ENCODE measurements at regions of chr9 and their contacts with region 1.

Region 1: DNA sequence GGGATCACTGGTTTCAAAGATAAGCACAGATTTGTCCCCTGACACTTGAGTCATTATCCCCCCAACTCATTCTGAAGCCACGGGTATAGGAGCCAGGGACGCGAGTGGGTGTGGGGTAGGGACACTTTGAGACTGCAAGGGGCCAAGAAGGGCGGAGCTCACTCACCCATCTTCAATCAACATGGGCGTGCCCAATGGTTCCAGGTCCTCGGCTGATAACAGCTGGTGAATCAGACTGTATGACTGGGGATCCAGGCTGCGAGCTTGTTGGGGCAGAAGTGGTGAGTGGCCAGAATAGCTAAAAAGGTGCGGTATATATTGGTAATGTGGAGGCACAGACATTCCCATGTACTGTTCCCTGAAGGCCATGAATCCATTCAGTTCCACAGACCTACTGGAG is 30.7 kb upstream of the NR5A1 start:
- DNase-seq: no peak
- H3K4me3 ChIP-seq: no peak overlapping the region
- CTCF ChIP-seq: no peak

Region 2: DNA sequence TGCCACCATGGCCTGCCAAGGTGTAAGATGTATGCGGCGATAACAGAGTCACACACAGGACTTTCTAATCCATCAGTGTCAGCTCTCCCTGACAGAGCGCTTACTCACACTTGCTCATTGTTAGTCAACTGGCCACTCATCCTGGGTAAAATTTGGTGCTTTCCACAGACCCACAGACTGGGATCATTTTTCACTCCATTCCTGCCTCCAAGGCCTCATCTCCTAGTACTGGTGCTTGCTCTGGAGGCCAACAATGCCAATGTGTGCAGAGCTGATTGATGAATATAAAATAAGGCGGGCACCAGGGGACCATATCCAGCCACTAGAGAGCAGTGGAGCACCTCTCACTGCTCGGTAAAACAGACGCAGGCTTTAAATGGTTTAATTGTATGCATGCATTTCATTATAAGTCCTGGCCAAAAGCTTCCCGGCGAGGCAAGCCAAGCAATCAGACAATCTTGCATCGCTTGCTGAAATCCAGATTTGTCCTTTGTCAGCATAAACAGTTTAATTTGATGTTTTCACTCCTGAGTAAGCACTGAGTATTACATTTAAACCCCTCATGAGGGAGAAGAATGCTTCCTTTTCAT is 145.0 kb before region 1 on chr9:
- CTCF ChIA-PET with region 1: interaction called, 18 read pairs
- POLR2A ChIA-PET with region 1: interaction called, 3 read pairs
- DNase-seq: peak; percentile 63
- H3K4me3 ChIP-seq: no peak overlapping the region
- CTCF ChIP-seq: peak; percentile 55

Region 3: DNA sequence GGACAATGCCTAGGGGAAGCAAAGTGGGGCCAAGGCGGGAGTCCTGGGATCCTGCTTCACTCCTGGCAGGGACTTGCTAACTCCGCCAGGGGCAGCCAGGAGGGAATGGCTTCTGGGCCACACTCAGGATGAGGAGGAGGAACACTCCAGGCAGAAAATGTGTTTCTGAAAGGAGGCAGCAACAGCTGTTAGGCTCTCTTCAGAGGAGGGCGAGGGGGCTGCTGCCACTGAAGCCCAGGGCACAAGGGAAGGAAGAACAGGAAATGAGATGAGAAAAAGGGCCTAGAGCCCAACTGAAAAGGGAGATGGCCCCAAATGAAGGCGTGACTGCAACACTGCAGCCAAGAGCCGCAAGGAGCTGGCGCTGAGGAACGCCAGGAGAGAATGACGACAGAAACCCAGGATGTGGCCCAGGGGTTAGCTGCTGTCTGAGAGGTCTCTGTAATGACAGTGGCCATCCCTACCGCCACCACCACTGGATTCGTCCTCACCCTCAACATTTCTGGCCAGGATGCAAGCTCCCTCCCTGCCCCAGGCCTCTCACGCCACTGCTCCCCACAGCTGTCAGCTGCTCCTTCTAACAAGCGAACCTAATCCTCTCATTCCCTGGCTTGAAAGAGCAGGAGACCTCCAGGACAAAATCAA is 138.5 kb before region 1 on chr9:
- CTCF ChIA-PET with region 1: interaction called, 18 read pairs
- POLR2A ChIA-PET with region 1: interaction called, 3 read pairs
- DNase-seq: no peak
- H3K4me3 ChIP-seq: no peak overlapping the region
- CTCF ChIP-seq: no peak

Region 4: GRCh38 chr9:124420991-124421543 is 116.9 kb before region 1 on chr9:
- CTCF ChIA-PET with region 1: interaction called, 263 read pairs
- POLR2A ChIA-PET with region 1: no interaction called
- DNase-seq: no peak
- H3K4me3 ChIP-seq: no peak overlapping the region
- CTCF ChIP-seq: no peak

Region 5: GRCh38 chr9:124513376-124513994 is 24.4 kb before region 1 on chr9:
- CTCF ChIA-PET with region 1: interaction called, 34 read pairs
- POLR2A ChIA-PET with region 1: no interaction called
- DNase-seq: no peak
- H3K4me3 ChIP-seq: no peak overlapping the region
- CTCF ChIP-seq: no peak

Region 6: DNA sequence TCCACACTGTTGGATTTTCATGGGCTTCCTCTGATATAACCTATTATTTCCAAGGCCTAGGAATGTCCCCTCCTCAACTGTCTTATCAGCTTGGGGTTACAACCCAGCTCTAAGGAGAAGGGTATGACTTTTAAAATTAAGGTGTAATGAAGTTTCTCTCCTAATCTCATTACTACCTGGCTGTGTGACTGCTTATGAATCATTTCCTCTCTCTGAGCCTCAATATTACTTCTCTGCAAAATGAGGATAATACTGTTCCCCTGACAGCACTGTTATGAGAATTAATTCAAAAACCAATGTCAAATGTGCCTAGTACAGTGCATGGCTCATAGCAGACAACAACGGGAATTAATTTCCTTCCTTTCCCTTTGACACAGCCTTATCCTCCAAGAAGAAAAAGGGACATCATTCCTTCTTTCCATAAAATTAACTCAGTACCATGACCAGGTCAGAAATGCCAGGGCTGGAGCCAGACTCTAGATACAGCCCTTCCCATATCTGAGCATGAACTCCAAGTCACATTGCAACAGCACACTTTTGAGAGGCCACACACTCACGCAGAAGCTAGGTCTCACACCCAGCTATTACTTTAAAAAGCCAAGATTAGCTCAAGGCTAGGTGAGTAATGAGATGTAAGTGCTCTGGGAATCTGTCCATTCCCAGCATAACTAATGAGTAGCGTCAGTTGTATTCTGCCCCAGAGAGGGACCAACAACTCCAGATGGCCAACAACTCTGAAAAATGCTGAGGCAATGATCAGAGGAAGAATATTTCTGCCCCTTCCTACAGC is 114.5 kb after region 1 on chr9:
- CTCF ChIA-PET with region 1: no interaction called
- POLR2A ChIA-PET with region 1: no interaction called
- DNase-seq: peak; percentile 97
- H3K4me3 ChIP-seq: no peak overlapping the region
- CTCF ChIP-seq: no peak

Measured in AG04449 (cell line).